Esophagus muscularis mucosa (tissue), 4 donors: ENCODE measurements at regions of chr15 and their contacts with region 1.

Region 1: DNA sequence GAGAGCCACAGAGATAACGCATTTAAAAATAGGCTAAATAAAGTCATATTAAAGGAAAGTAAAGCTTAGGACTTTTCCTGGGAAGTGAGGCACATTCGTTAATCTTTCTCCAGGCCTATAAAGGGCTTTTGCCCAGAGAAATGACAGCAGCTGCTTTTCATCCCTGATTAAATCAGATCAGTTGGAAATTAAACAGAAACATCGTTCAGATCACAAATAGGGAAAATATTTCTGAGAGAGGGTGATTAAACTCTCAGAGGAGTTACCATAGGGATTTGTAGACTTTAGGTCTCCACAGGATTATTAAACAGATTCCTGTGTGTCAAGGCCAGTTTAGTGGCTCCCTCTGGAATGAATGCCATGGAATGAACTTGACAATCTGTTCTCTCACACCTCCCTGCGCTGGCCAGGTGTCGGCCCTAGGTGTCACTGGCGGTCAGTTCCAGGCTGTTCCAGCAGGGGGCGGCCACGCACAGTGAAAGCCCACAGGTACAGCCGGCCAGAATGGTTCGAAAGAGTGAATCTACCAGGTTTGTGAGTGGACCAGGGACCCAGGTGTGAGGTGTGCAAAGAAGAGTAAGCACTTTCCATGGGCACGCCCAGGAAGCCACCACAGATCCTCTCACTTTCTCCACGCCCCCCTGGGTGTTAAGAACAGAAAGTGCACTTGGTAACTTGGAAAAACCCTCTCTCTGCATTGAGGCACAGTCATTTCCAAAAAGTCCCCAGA is 253.0 kb upstream of the RASGRP1 start:
- DNase-seq: peak; percentile 95
- H3K4me3 ChIP-seq: no peak overlapping the region
- H3K27ac ChIP-seq: peak overlapping the region in 3 of 4 donors; percentile 54 to 63 (median 57)
- H3K4me1 ChIP-seq: peaks cover 0 to 19% (median 15%) of the 10 kb centered on the region in 4 donors
- H3K27me3 ChIP-seq: no peaks in the 10 kb centered on the region
- CTCF ChIP-seq: peak; percentile 98 to 100 (median 99)
- EP300 ChIP-seq: no peak
- POLR2A ChIP-seq: no peak

Region 2: GRCh38 chr15:38389924-38390542 is 427.6 kb before region 1 on chr15:
- intact Hi-C with region 1: no loop called
- DNase-seq: no peak
- H3K4me3 ChIP-seq: no peak overlapping the region
- H3K27ac ChIP-seq: no peak overlapping the region
- H3K4me1 ChIP-seq: no peaks in the 10 kb centered on the region
- H3K27me3 ChIP-seq: no peaks in the 10 kb centered on the region
- CTCF ChIP-seq: peak; percentile 68 to 79 (median 71)
- EP300 ChIP-seq: no peak
- POLR2A ChIP-seq: no peak

Region 3: DNA sequence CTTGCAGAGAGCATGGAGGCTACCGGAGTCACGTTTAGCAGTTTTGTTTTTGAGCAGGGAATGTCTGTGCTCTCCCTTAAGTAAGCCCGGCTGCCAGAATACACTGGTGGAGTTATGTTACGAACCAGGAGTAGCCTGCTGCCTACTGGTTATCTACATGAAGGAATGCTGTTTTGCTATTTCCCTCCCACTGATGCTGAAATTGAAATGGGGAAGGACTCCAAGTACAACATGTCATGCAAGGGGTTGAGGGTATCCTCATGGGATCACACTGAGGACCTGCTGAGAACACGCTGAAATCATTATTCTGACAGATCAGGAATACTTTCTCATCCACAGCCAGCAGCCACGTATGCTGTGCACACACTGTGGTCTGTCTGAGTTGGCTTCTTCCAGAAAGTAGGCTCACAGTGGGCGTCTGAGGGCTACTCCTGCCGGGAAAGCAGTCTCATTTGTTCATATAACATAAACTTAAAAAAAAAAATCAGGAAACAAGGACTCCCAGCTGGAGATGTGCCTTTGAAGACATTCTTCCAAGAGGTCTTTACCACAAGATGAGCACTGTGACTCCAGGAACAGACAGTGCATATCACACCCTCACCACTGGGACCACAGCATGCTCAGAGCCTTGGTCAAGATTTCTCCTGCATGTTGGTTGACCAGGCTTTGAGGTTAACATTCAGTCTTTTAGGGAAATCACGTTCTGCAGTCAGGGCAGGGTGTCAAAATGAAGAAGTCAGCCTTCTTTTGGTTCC is 47.4 kb after region 1 on chr15:
- intact Hi-C with region 1: no loop called
- DNase-seq: no peak
- H3K4me3 ChIP-seq: no peak overlapping the region
- H3K27ac ChIP-seq: peak overlapping the region; percentile 41 to 60 (median 53)
- H3K4me1 ChIP-seq: peaks cover 0 to 25% (median 8%) of the 10 kb centered on the region in 4 donors
- H3K27me3 ChIP-seq: no peaks in the 10 kb centered on the region
- CTCF ChIP-seq: no peak
- EP300 ChIP-seq: no peak
- POLR2A ChIP-seq: no peak

Region 4: DNA sequence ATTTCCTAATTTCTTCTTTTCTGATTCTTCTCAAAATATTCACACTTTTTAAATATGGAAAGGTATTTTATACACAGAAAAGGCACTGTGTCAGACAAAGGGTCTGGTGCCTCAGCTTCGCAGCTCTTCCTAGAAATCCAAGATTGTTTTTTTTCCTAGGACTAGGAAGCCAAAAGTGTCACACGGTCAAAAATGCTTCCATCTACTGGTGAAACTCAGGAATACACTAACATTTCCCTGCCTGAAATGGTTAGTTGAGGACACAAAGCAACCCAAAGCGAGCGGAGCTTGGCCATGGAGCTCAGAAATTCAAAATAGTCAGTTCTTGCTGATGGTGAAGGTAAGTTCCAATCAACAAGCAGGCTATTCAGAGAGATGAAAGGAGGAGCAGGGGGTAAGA is 173.5 kb after region 1 on chr15:
- intact Hi-C with region 1: loop called (anchors 2 kb)
- DNase-seq: no peak
- H3K4me3 ChIP-seq: no peak overlapping the region
- H3K27ac ChIP-seq: no peak overlapping the region
- H3K4me1 ChIP-seq: peaks cover 16 to 31% (median 24%) of the 10 kb centered on the region in 4 donors
- H3K27me3 ChIP-seq: no peaks in the 10 kb centered on the region
- CTCF ChIP-seq: peak; percentile 45 to 55 (median 54)
- EP300 ChIP-seq: no peak
- POLR2A ChIP-seq: no peak

Region 5: DNA sequence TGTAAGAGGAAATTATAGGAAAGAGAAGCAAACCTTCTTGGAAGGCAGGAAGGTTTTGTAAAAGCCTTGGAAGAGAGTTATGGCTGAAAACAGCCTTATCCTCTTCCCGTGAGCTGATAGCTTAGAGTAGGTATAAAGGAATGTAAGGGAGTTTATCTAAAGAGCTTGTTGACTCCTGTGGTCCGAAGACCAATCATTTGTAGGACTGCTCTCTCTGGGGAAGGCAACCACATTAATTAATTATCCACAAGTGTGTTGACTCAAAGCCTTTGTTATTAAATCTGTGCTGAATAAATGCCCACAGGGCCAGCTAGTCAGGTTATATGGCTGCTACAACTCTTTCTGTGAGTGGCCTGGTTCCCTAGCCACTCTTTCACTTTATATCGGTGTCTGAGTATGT is 199.1 kb after region 1 on chr15:
- intact Hi-C with region 1: no loop called
- DNase-seq: no peak
- H3K4me3 ChIP-seq: no peak overlapping the region
- H3K27ac ChIP-seq: no peak overlapping the region
- H3K4me1 ChIP-seq: peaks cover 0 to 4% (median 1%) of the 10 kb centered on the region in 4 donors
- H3K27me3 ChIP-seq: no peaks in the 10 kb centered on the region
- CTCF ChIP-seq: no peak
- EP300 ChIP-seq: no peak
- POLR2A ChIP-seq: no peak

Region 6: GRCh38 chr15:39171944-39172368 is 354.4 kb after region 1 on chr15:
- intact Hi-C with region 1: loop called (anchors 5 kb)
- DNase-seq: no peak
- H3K4me3 ChIP-seq: no peak overlapping the region
- H3K27ac ChIP-seq: peak overlapping the region; percentile 61 to 78 (median 66)
- H3K4me1 ChIP-seq: peaks cover 14 to 35% (median 31%) of the 10 kb centered on the region in 4 donors
- H3K27me3 ChIP-seq: no peaks in the 10 kb centered on the region
- CTCF ChIP-seq: peak; percentile 42 to 55 (median 45)
- EP300 ChIP-seq: no peak
- POLR2A ChIP-seq: no peak

Region 7: GRCh38 chr15:39573844-39574243 is 756.3 kb after region 1 on chr15:
- intact Hi-C with region 1: loop called (anchors 2 kb)
- DNase-seq: peak; percentile 84
- H3K4me3 ChIP-seq: no peak overlapping the region
- H3K27ac ChIP-seq: peak overlapping the region; percentile 10 to 43 (median 28)
- H3K4me1 ChIP-seq: peaks cover under 1 to 31% (median 25%) of the 10 kb centered on the region in 4 donors
- H3K27me3 ChIP-seq: no peaks in the 10 kb centered on the region
- CTCF ChIP-seq: no peak
- EP300 ChIP-seq: no peak
- POLR2A ChIP-seq: no peak

Region 8: GRCh38 chr15:39756806-39757522 is 939.4 kb after region 1 on chr15:
- intact Hi-C with region 1: loop called (anchors 10 kb)
- DNase-seq: no peak
- H3K4me3 ChIP-seq: no peak overlapping the region
- H3K27ac ChIP-seq: no peak overlapping the region
- H3K4me1 ChIP-seq: peaks cover 0 to 29% (median 25%) of the 10 kb centered on the region in 4 donors
- H3K27me3 ChIP-seq: no peaks in the 10 kb centered on the region
- CTCF ChIP-seq: peak; percentile 78 to 90 (median 87)
- EP300 ChIP-seq: no peak
- POLR2A ChIP-seq: no peak